Activated CD4-positive, alpha-beta memory T cell treated with anti-CD3 and anti-CD28 coated beads, Interleukin-2, amount 10 ng/mL, durations not matched to agents 7 days and 5 days (primary cell): ENCODE measurements at regions of chr1 and their contacts with region 1.

Region 1: GRCh38 chr1:212035123-212035834 is at the starts of genes DTL and INTS7:
- DNase-seq: peak; percentile 99
- H3K4me3 Mint-ChIP-seq: peak within 1 kb of the TSS; percentile 98
- H3K27ac Mint-ChIP-seq: peak within 1 kb of the TSS; percentile 85
- H3K4me1 Mint-ChIP-seq: peaks cover 64% of the 10 kb centered on the region
- H3K27me3 Mint-ChIP-seq: no peaks in the 10 kb centered on the region
- total RNA-seq, gene DTL: 59.6 to 60.7 TPM
- total RNA-seq, gene INTS7: 28.4 to 28.8 TPM

Region 2: DNA sequence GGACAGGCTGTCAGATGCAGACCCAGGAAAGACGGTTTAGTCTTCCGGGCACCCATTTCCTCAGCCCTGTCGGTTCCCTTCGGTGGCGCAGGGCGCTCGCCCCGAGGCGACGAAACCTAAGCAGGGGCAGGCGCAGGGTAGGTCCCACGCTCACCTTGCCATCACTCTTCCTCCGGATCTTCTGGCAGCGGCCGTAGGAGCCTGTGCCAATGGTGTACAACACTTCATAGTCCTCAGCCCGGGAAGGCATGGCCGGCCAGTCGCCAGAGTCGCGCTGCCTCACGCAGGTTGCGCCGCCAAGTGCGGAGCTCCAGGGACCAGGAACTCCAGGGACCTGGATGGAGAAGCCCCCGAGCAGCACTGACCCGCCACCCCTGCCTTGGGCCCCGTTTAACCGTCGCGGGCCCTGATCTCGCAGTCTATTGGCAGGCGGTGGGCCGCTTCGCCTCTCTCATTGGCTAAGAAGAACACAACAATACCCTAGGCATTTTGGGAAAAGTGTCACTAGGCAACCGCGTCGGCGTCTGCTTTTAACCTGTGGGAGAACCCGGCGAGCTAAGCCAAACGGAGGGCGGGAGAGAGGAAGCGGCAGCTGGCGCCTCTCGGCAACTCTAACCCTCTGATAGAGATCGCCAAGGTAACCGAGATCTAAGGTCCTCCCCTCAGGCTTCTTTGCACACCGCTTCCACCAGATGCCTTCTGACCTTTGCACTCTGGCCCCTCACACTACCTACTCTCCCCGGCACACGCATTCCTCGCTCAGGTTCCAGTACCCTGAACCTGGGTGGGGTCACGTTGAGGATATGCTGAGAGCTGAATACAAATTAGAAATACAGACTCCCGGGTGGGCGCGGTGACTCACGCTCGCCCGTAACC is 359.8 kb before region 1 on chr1 and contains the start of gene NEK2:
- CTCF ChIA-PET with region 1: interaction called, 49 read pairs
- POLR2A ChIA-PET with region 1: interaction called, 24 read pairs
- DNase-seq: peak; percentile 93
- H3K4me3 Mint-ChIP-seq: peak within 1 kb of the TSS; percentile 94
- H3K27ac Mint-ChIP-seq: peak within 1 kb of the TSS; percentile 79
- H3K4me1 Mint-ChIP-seq: peaks cover 43% of the 10 kb centered on the region
- H3K27me3 Mint-ChIP-seq: peaks cover 2% of the 10 kb centered on the region
- total RNA-seq, gene NEK2: 46.1 to 47.5 TPM

Region 3: GRCh38 chr1:211698161-211699026 is 336.9 kb before region 1 on chr1:
- CTCF ChIA-PET with region 1: interaction called, 24 read pairs
- POLR2A ChIA-PET with region 1: interaction called, 11 read pairs
- DNase-seq: peak; percentile 85
- H3K4me3 Mint-ChIP-seq: peak overlapping the region; percentile 52
- H3K27ac Mint-ChIP-seq: no peak overlapping the region
- H3K4me1 Mint-ChIP-seq: peaks cover 46% of the 10 kb centered on the region
- H3K27me3 Mint-ChIP-seq: peaks cover 20% of the 10 kb centered on the region

Region 4: GRCh38 chr1:212012034-212012740 is 23.1 kb before region 1 on chr1:
- CTCF ChIA-PET with region 1: interaction called, 19 read pairs
- POLR2A ChIA-PET with region 1: interaction called, 11 read pairs
- DNase-seq: peak; percentile 72
- H3K4me3 Mint-ChIP-seq: no peak overlapping the region
- H3K27ac Mint-ChIP-seq: no peak overlapping the region
- H3K4me1 Mint-ChIP-seq: no peaks in the 10 kb centered on the region
- H3K27me3 Mint-ChIP-seq: no peaks in the 10 kb centered on the region

Region 5: GRCh38 chr1:212045981-212046380 is 10.7 kb after region 1 on chr1:
- CTCF ChIA-PET with region 1: interaction called, 19 read pairs
- POLR2A ChIA-PET with region 1: interaction called, 24 read pairs
- DNase-seq: no peak
- H3K4me3 Mint-ChIP-seq: no peak overlapping the region
- H3K27ac Mint-ChIP-seq: no peak overlapping the region
- H3K4me1 Mint-ChIP-seq: peaks cover 23% of the 10 kb centered on the region
- H3K27me3 Mint-ChIP-seq: no peaks in the 10 kb centered on the region

Region 6: GRCh38 chr1:212256369-212256768 is 221.1 kb after region 1 on chr1:
- CTCF ChIA-PET with region 1: interaction called, 5 read pairs
- POLR2A ChIA-PET with region 1: interaction called, 12 read pairs
- DNase-seq: peak; percentile 76
- H3K4me3 Mint-ChIP-seq: no peak overlapping the region
- H3K27ac Mint-ChIP-seq: peak overlapping the region; percentile 93
- H3K4me1 Mint-ChIP-seq: peaks cover 75% of the 10 kb centered on the region
- H3K27me3 Mint-ChIP-seq: peaks cover 1% of the 10 kb centered on the region

Region 7: DNA sequence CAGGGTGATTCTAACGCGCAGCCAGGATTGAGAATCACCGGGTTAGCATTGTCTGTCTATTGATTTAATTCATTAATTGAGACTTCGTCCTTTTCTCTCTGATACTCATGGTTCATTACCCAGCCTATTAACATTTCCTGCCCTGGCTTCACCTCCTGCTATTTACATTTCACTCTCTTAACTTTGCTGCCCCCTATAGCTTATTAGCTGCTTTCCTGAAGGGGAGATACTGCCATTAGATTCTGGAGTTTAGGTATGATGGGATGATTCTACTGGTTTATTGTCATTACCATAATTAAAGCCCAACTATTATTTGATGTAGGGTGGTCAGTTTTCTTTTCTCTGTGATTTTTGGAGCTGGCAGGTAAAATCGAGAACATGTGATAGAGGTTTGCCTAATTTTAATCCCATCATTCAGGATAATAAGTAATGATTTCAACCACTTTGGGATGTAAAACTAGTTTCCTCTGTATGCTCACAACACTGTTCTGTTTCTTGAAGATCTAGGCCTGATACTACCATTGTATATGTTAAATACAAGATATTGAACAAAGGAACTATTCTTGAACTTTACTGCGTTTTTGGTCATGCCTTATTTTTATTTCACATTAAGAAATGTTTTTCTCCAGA is 256.3 kb after region 1 on chr1:
- CTCF ChIA-PET with region 1: interaction called, 25 read pairs
- POLR2A ChIA-PET with region 1: interaction called, 43 read pairs
- DNase-seq: no peak
- H3K4me3 Mint-ChIP-seq: peak overlapping the region; percentile 3
- H3K27ac Mint-ChIP-seq: no peak overlapping the region
- H3K4me1 Mint-ChIP-seq: peaks cover 70% of the 10 kb centered on the region
- H3K27me3 Mint-ChIP-seq: no peaks in the 10 kb centered on the region